ENCODE measurements at regions of chr14 and their contacts with region 1.

Region 1: DNA sequence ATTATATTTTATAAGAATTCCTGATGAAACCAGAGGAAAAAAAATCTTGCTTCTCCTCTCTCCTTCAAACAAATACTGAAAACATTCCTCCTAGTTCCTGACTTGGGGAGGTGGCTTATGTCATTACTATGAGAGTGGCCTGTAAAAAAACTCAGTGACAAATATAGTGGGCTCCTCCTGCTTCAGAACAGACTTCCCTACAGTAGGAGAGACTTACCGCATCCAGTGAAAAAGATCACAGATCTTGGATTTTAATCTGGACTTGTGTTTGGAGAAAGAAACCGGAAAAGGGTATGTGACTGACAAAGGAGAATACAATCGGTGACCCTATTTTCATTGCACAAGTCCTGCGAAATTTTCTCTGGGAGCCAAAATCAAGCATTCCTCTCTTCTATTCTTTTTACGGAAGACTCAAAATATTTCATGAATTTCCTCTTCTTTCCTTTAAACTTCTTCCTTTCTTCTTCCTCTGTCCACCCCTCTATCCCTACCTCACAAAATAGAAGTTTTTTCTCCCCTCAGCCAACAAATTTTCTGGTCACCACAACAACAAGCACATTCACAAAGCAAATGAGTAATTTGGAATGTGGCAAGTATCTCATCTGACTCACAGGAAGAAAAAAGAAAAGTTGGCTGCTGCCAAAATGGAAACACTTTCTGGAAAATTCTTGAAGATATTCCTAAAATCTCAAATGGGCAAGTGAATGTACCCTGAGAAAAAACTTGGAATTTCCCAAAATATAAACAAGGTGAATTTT is 185.1 kb upstream of the CDKN3 start:
- DNase-seq: peak; percentile 82
- H3K4me3 Mint-ChIP-seq: peak overlapping the region; percentile 41
- H3K27ac Mint-ChIP-seq: peak overlapping the region; percentile 92
- H3K4me1 Mint-ChIP-seq: peaks cover 38% of the 10 kb centered on the region
- H3K27me3 Mint-ChIP-seq: no peaks in the 10 kb centered on the region
- CTCF ChIP-seq: no peak

Region 2: GRCh38 chr14:54166049-54166950 is 45.4 kb before region 1 on chr14:
- CTCF ChIA-PET with region 1: no interaction called
- POLR2A ChIA-PET with region 1: no interaction called
- intact Hi-C with region 1: no loop called
- DNase-seq: no peak
- H3K4me3 Mint-ChIP-seq: no peak overlapping the region
- H3K27ac Mint-ChIP-seq: no peak overlapping the region
- H3K4me1 Mint-ChIP-seq: peaks cover 20% of the 10 kb centered on the region
- H3K27me3 Mint-ChIP-seq: no peaks in the 10 kb centered on the region
- CTCF ChIP-seq: no peak

Region 3: GRCh38 chr14:54226103-54226502 is 14.4 kb after region 1 on chr14:
- CTCF ChIA-PET with region 1: no interaction called
- POLR2A ChIA-PET with region 1: interaction called, 7 read pairs
- intact Hi-C with region 1: loop called (anchors 1 kb)
- DNase-seq: peak; percentile 30
- H3K4me3 Mint-ChIP-seq: no peak overlapping the region
- H3K27ac Mint-ChIP-seq: peak overlapping the region; percentile 32
- H3K4me1 Mint-ChIP-seq: peaks cover 27% of the 10 kb centered on the region
- H3K27me3 Mint-ChIP-seq: no peaks in the 10 kb centered on the region
- CTCF ChIP-seq: no peak

Region 4: DNA sequence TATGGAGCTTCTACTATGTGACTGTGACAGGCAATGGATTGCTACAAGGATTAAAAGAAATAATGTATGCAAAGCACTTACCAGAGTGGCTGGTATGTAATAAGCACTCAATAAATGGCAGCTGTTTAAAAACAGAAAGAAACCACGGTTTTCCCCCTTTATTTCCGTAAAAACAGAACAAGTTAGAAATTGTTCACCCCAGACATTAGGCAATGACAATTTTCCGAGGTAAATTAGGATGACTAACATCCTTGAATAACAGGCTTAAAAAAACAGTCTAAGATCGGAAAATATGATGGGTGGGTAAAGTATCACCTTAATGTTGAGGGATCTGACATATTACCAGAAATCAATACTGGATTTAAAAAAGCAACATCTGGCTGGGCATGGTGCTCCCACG is 250.3 kb after region 1 on chr14:
- CTCF ChIA-PET with region 1: no interaction called
- POLR2A ChIA-PET with region 1: no interaction called
- intact Hi-C with region 1: no loop called
- DNase-seq: peak; percentile 39
- H3K4me3 Mint-ChIP-seq: no peak overlapping the region
- H3K27ac Mint-ChIP-seq: no peak overlapping the region
- H3K4me1 Mint-ChIP-seq: no peaks in the 10 kb centered on the region
- H3K27me3 Mint-ChIP-seq: no peaks in the 10 kb centered on the region
- CTCF ChIP-seq: no peak